ENCODE measurements at regions of chr12 and their contacts with region 1.

Region 1: GRCh38 chr12:38921025-38921677 is 15.8 kb upstream of the CPNE8 start:
- DNase-seq: peak; percentile 73
- H3K4me3 ChIP-seq: no peak overlapping the region
- H3K27ac ChIP-seq: no peak overlapping the region
- H3K4me1 ChIP-seq: peaks cover 5% of the 10 kb centered on the region
- H3K27me3 ChIP-seq: no peaks in the 10 kb centered on the region
- CTCF ChIP-seq: peak; percentile 79 to 81

Region 2: DNA sequence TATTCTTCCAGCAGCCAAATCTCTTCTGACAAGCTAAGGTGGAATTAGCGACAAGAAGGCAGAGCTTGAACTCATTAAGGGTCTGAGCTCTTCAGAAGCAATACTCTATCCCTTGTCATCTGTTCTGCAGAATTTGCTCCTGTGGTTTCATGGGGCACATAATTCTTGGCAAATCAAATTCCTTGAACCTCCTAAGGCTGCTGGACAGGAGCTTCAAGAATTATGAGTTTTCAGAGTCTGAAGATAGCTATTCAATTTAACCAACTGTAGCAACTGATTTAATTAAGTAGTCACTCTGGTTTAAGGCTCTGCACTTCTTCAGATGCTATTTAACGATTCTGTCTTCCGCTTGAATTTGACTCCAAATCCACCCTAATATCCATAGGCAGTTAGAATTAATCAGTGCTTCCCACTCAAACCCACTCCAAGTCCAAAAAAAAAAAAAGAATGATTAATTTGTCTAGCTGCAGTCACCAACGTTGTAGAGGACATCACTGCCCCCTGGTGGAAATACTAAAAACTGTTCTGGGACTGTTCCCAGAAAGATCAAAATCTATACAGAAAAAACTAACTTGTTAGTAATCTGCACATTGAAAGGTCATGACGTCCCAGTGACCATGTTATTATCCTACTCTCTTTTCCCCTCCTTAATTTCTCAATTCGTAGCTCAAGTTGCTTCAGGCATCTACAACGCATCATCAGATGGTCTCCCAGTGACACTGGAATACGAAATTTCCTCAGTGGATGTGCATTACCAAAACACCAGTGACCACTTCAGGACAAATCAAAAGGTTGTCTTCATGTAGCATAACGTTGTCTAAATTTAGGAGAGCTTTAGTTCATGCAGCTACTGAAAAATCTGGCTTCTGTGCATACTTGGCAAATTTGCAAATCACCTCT is 352.0 kb after region 1 on chr12:
- CTCF ChIA-PET with region 1: interaction called, 3 read pairs
- dilution Hi-C with region 1: no loop called
- in situ Hi-C with region 1: no loop called
- intact Hi-C with region 1: loop called (anchors 1 kb)
- DNase-seq: peak; percentile 35
- H3K4me3 ChIP-seq: no peak overlapping the region
- H3K27ac ChIP-seq: no peak overlapping the region
- H3K4me1 ChIP-seq: no peaks in the 10 kb centered on the region
- H3K27me3 ChIP-seq: no peaks in the 10 kb centered on the region
- CTCF ChIP-seq: peak; percentile 58 to 70